ENCODE measurements at regions of chr9 and their contacts with region 1.

Region 1: GRCh38 chr9:11233696-11234095 is 620.9 kb upstream of the PTPRD start:
- DNase-seq: no peak
- H3K4me3 ChIP-seq: no peak overlapping the region
- H3K27ac ChIP-seq: no peak overlapping the region
- H3K4me1 ChIP-seq: no peaks in the 10 kb centered on the region
- H3K27me3 ChIP-seq: no peaks in the 10 kb centered on the region
- CTCF ChIP-seq: no peak

Region 2: GRCh38 chr9:10806868-10807267 is 426.8 kb before region 1 on chr9:
- CTCF ChIA-PET with region 1: no interaction called
- POLR2A ChIA-PET with region 1: interaction called, 10 read pairs
- intact Hi-C with region 1: no loop called
- DNase-seq: no peak
- H3K4me3 ChIP-seq: no peak overlapping the region
- H3K27ac ChIP-seq: no peak overlapping the region
- H3K4me1 ChIP-seq: no peaks in the 10 kb centered on the region
- H3K27me3 ChIP-seq: no peaks in the 10 kb centered on the region
- CTCF ChIP-seq: no peak

Region 3: DNA sequence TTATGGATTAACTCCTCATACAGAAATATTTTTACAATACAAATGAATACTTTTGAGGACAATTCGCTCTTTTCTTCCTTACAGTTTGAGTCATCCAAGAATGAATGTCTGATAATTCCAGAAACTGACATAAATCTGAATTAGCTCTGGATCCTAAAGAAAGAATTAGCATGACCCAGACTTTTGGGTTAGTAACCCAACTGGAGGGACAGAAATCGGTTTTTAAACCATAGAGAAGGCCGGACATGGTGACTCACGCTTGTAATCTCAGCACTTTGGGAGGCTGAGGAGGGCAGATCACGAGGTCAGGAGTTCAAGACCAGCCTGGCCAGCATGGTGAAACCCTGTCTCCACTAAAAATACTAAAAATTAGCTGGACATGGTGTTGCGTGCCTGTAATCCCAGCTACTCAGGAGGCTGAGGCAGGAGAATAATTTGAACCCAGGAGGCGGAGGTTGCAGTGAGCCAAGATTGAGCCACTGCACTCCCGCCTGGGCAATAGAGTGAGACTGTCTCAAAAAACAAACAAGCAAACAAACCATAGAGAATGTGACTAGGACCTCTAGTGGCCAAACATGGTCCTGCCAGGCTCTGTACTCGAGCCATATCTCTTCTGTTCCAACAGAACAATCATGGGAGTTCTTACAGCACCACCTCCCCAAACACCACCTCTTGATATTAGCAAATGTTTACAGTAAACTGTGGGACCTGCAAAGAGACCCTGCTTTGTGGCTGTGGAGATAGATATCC is 1585.9 kb after region 1 on chr9:
- CTCF ChIA-PET with region 1: no interaction called
- POLR2A ChIA-PET with region 1: no interaction called
- intact Hi-C with region 1: no loop called
- DNase-seq: no peak
- H3K4me3 ChIP-seq: no peak overlapping the region
- H3K27ac ChIP-seq: no peak overlapping the region
- H3K4me1 ChIP-seq: peaks cover 22% of the 10 kb centered on the region
- H3K27me3 ChIP-seq: no peaks in the 10 kb centered on the region
- CTCF ChIP-seq: peak; percentile 49